HEK293 (cell line): ENCODE measurements at regions of chr1 and their contacts with region 1.

Region 1: GRCh38 chr1:55179177-55179835 is 35.9 kb downstream of the USP24 start:
- H3K4me3 ChIP-seq: no peak overlapping the region
- H3K27ac ChIP-seq: no peak overlapping the region
- H3K4me1 ChIP-seq: no peaks in the 10 kb centered on the region
- CTCF ChIP-seq: no peak

Region 2: GRCh38 chr1:55217226-55217986 is 38.1 kb after region 1 on chr1:
- CTCF ChIA-PET with region 1: interaction called, 3 read pairs
- POLR2A ChIA-PET with region 1: interaction called, 16 read pairs
- H3K4me3 ChIP-seq: no peak overlapping the region
- H3K27ac ChIP-seq: no peak overlapping the region
- H3K4me1 ChIP-seq: peaks cover 4% of the 10 kb centered on the region
- CTCF ChIP-seq: no peak